CD8-positive, alpha-beta memory T cell (primary cell): ENCODE measurements at regions of chr1 and their contacts with region 1.

Region 1: DNA sequence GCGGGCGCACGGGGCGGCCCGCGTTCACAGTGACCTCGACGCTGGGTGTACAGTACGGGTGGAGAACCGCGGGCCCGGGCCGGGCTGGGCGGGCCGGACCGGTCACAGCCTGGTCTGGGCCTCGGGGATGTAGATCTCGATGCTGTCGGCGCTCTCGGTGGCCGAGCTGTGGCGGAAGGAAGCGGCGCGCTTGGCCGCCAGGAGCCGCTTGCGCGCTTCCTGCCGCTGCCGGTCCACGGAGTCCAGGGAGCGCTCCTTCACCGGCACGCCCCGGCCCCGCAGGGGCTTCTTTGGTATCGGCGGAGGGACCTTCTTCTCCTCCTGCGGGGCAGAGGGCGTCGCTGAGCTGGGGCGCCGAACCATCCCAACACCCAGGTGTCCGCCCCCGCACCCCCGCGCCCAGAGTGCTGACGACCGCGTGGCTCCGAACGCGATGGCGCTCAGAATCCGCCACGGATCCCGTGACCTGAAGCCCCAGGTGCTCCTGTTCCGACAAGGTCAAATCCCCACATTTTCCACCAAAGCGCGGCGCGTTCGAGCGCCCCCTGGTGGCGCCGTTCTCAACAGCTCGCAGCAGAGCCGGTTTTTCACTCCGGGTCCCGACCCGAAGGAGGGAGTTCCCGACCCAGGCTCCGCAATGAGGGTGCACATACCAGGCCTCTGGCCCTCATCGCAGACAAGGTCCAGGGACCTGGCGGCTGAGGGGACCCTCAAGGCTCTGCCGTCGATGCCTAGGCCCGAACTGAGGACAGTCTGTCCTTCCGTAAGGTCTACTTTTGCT is 6.6 kb upstream of the SMIM12 start:
- DNase-seq: peak; percentile 86 to 92 (median 91)
- H3K4me3 ChIP-seq: peak overlapping the region; percentile 71
- H3K4me3 Mint-ChIP-seq: peak overlapping the region; percentile 85 to 94 (median 88)
- H3K27ac ChIP-seq: peak overlapping the region; percentile 61
- H3K27ac Mint-ChIP-seq: peak overlapping the region; percentile 71 to 99 (median 89)
- H3K4me1 ChIP-seq: peaks cover 36% of the 10 kb centered on the region
- H3K4me1 Mint-ChIP-seq: peaks cover 35 to 54% (median 43%) of the 10 kb centered on the region in 3 donors
- H3K27me3 ChIP-seq: no peaks in the 10 kb centered on the region
- H3K27me3 Mint-ChIP-seq: peaks cover 1 to 3% of the 10 kb centered on the region in 2 donors

Region 2: DNA sequence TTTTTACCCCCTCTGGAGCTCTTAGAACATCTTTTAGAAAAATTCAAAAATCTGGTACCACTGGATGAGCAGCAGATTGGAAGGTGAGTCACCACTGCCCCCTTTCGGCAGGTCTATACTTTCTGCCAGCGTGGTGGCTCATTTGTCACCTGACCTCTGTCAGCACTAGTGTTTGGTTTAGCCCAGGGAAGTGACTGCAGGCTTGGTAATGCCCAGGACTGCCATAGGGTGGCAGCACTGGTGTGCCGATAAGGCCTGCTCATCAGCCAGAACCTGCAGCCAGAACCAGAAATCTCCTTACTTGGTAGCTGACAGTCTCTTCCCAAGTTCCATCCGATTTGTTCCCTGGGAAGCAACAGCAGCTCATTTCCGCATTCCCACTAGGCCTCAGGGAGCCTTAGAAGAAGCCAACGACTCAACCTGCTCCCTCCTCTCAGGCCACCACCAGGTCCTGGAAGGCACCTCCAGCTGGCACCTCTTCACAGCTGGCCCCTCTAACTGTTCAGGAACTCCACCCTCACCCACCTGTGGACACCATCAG is 13.4 kb before region 1 on chr1:
- CTCF ChIA-PET with region 1: interaction called, 87 read pairs
- POLR2A ChIA-PET with region 1: interaction called, 4 read pairs
- DNase-seq: peak; percentile 81 to 92 (median 88)
- H3K4me3 ChIP-seq: no peak overlapping the region
- H3K4me3 Mint-ChIP-seq: peak overlapping the region in 1 of 7 donors; percentile 25
- H3K27ac ChIP-seq: no peak overlapping the region
- H3K27ac Mint-ChIP-seq: peak overlapping the region; percentile 11 to 94 (median 58)
- H3K4me1 ChIP-seq: peaks cover 4% of the 10 kb centered on the region
- H3K4me1 Mint-ChIP-seq: peaks cover 36 to 39% (median 38%) of the 10 kb centered on the region in 3 donors
- H3K27me3 ChIP-seq: no peaks in the 10 kb centered on the region
- H3K27me3 Mint-ChIP-seq: peaks cover 0 to 2% of the 10 kb centered on the region in 2 donors

Region 3: DNA sequence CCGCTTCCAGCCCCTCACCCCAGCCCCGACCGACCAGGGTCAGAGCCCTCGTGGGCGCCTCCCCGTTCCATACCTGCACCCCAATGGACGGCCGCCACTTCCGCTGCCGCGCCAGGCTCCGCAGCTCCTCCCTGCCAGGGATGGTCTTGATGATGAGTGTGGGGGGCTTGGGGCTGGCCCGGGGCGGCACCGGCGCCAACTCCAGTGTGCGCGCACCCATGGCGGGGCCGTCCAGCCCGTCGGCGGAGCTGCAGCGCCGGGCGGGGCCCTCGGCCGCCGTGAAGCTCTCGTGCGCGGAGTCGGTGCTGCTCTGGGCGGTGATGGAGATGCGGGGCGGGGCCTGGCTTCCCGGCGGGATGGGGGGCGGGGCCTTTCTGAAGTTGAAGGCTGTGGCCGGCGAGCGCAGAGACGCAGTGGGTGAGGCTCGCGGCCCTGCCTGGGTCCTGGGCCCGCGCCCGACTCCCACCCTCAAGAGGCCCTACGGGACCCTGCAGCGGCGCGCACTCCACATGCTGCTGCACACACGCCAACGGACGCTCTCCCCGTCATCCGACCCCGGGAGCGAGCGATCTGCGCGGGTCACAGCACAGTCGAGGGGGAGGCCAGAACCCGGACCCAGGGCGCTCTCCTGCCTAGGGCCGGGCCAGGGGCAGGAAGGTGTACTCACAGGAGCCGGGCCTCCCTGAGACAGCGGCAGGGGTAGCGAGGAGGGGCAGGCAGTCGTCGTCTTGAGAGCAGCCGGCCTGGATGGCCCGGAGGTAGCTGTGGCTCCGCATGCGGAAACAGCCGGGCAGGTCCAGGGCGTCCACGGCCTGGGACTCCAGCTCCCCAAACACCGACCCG is 19.5 kb after region 1 on chr1:
- CTCF ChIA-PET with region 1: interaction called, 11 read pairs
- POLR2A ChIA-PET with region 1: no interaction called
- DNase-seq: peak in 2 of 5 donors; percentile 15 to 34
- H3K4me3 ChIP-seq: no peak overlapping the region
- H3K4me3 Mint-ChIP-seq: peak overlapping the region; percentile 45 to 77 (median 65)
- H3K27ac ChIP-seq: no peak overlapping the region
- H3K27ac Mint-ChIP-seq: peak overlapping the region in 1 of 8 donors; percentile 9
- H3K4me1 ChIP-seq: peaks cover 6% of the 10 kb centered on the region
- H3K4me1 Mint-ChIP-seq: peaks cover 0 to 5% (median 3%) of the 10 kb centered on the region in 3 donors
- H3K27me3 ChIP-seq: peaks cover 15% of the 10 kb centered on the region
- H3K27me3 Mint-ChIP-seq: peaks cover 28 to 59% of the 10 kb centered on the region in 2 donors

Region 4: GRCh38 chr1:34915521-34915920 is 49.4 kb after region 1 on chr1:
- CTCF ChIA-PET with region 1: no interaction called
- POLR2A ChIA-PET with region 1: no interaction called
- DNase-seq: no peak
- H3K4me3 ChIP-seq: no peak overlapping the region
- H3K4me3 Mint-ChIP-seq: no peak overlapping the region
- H3K27ac ChIP-seq: no peak overlapping the region
- H3K27ac Mint-ChIP-seq: no peak overlapping the region
- H3K4me1 ChIP-seq: no peaks in the 10 kb centered on the region
- H3K4me1 Mint-ChIP-seq: peaks cover 0 to 4% (median 4%) of the 10 kb centered on the region in 3 donors
- H3K27me3 ChIP-seq: no peaks in the 10 kb centered on the region
- H3K27me3 Mint-ChIP-seq: peaks cover 16 to 28% of the 10 kb centered on the region in 2 donors